ENCODE measurements at regions of chr17 and their contacts with region 1.

Region 1: DNA sequence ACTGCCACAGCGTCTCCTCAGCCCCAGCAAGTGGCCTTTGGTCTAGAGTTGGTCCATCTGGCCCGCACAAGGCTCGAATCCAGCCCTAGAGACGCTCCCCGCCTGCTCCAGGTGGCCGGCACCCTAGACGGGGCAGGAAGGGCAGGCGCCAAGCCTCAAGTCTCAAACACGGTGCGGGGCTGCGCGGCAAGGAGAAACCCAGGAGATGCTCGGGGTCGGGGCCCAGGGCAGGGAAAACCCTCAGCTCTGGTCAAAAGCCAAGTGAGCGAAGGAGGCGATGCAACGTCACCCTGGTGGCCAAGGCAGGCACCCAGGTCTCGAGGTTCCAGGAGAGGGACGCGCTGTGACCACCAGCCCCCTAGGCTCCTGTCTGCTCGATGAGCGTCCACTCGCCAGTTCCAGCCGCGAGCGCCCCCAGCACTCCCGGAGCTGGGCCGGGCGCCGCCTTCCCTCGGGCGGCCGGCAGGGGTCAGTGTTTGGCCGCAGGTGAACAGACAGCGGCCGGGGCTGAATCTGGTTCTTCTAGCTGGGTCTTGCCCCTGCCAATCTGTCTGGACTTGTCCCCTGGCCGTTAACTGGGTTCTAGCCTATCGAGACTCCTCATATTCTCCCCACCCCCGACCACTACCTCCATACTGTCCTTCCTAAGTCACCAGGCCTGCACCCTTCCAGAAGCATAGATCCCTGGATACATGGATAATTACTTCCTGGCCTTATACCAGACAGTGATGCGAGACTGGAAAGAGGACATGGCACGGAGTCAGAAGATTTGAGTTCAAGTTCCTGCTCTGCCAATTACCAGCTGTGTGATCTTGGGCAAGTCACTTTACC is 44.0 kb downstream of the PRAC1 start:
- DNase-seq: peak; percentile 53
- H3K4me3 ChIP-seq: no peak overlapping the region
- H3K27ac ChIP-seq: no peak overlapping the region
- H3K4me1 ChIP-seq: no peaks in the 10 kb centered on the region
- H3K27me3 ChIP-seq: peaks cover 13 to 19% of the 10 kb centered on the region in 2 experiments
- CTCF ChIP-seq: peak; percentile 95 to 100
- POLR2A ChIP-seq: no peak

Region 2: GRCh38 chr17:48636177-48637018 is 42.0 kb before region 1 on chr17:
- CTCF ChIA-PET with region 1: interaction called, 10 read pairs
- POLR2A ChIA-PET with region 1: no interaction called
- dilution Hi-C with region 1: no loop called
- intact Hi-C with region 1: no loop called
- DNase-seq: peak; percentile 93
- H3K4me3 ChIP-seq: no peak overlapping the region
- H3K27ac ChIP-seq: no peak overlapping the region
- H3K4me1 ChIP-seq: no peaks in the 10 kb centered on the region
- H3K27me3 ChIP-seq: peaks cover 69 to 85% of the 10 kb centered on the region in 2 experiments
- CTCF ChIP-seq: peak; percentile 89 to 96
- POLR2A ChIP-seq: no peak

Region 3: GRCh38 chr17:48711102-48711501 is 32.7 kb after region 1 on chr17:
- CTCF ChIA-PET with region 1: interaction called, 13 read pairs
- POLR2A ChIA-PET with region 1: no interaction called
- dilution Hi-C with region 1: no loop called
- intact Hi-C with region 1: no loop called
- DNase-seq: no peak
- H3K4me3 ChIP-seq: no peak overlapping the region
- H3K27ac ChIP-seq: no peak overlapping the region
- H3K4me1 ChIP-seq: no peaks in the 10 kb centered on the region
- H3K27me3 ChIP-seq: peaks cover 29 to 39% of the 10 kb centered on the region in 2 experiments
- CTCF ChIP-seq: no peak
- POLR2A ChIP-seq: no peak

Region 4: DNA sequence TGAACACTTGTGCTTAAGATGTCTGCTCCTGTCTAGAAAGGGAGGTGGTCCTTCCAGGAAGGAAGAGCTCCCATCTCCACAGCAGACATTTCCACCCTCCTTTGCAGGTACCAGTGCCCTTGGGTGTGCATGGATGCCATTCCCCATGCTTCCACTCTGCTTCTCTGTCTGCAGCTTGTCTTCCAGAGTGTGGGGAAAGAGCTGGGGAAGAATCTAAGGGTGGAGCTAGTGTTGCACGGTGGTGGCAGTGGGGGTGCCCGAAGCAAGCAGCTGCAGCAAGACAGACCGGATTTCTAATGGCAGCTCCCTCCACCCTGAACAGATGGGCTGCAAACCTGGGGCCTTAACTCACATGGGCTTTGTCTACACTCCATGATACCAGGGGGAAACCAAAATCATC is 72.8 kb after region 1 on chr17:
- CTCF ChIA-PET with region 1: interaction called, 10 read pairs
- POLR2A ChIA-PET with region 1: no interaction called
- dilution Hi-C with region 1: loop called (anchors 25 kb)
- intact Hi-C with region 1: no loop called
- DNase-seq: no peak
- H3K4me3 ChIP-seq: no peak overlapping the region
- H3K27ac ChIP-seq: no peak overlapping the region
- H3K4me1 ChIP-seq: peaks cover 16% of the 10 kb centered on the region
- H3K27me3 ChIP-seq: peaks cover 85 to 95% of the 10 kb centered on the region in 2 experiments
- CTCF ChIP-seq: no peak
- POLR2A ChIP-seq: no peak

Region 5: DNA sequence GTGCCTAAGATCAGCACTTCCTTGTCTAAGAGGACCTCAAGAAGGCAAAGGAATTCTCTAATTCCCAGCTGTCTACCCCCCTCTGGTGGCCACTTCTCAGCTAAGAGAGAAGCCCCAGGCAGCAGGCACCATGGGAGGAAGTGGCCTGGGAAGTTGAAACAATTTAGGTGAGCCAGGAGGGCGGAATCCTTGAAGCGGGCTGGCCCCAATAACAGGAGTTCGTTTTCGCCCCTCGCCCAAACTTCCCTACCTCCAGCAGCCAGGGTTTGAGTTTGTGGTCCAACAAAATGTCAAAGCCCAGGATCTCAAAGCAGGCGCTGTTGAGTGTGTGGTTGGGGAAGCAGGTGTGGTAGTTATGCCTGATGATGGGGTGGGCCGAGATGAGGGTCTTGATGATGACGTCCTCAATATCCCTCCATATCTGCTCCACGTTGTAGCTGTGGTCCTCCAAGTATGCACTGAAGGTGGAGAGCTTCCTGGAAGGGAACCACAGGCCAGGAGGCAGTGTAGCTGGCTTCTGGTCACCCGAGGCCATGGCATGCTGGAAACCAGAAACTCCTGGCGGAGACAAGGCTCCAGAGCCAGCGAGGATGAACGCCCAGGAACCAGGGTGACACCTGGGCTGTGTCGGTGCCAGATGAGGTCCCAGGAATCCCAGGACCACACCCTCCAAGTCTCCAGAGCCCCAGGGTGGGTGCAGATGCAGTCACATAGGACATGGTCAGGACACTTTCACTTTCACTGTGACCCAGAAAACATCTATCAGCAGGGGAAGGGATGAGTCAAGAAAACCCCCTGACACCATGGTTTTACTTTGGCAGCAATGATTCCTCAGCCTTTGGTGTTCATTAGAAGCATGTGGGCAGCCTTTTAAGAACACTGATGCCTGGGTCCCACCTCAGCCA is 113.0 kb after region 1 on chr17:
- CTCF ChIA-PET with region 1: interaction called, 220 read pairs
- POLR2A ChIA-PET with region 1: no interaction called
- dilution Hi-C with region 1: no loop called
- intact Hi-C with region 1: loop called (anchors 1 kb)
- DNase-seq: peak; percentile 79
- H3K4me3 ChIP-seq: no peak overlapping the region
- H3K27ac ChIP-seq: no peak overlapping the region
- H3K4me1 ChIP-seq: no peaks in the 10 kb centered on the region
- H3K27me3 ChIP-seq: peaks cover 9 to 15% of the 10 kb centered on the region in 2 experiments
- CTCF ChIP-seq: peak; percentile 78 to 84
- POLR2A ChIP-seq: no peak

Region 6: GRCh38 chr17:48816774-48817590 is 138.6 kb after region 1 on chr17 and contains the start of gene TTLL6:
- CTCF ChIA-PET with region 1: interaction called, 21 read pairs
- POLR2A ChIA-PET with region 1: no interaction called
- dilution Hi-C with region 1: no loop called
- intact Hi-C with region 1: no loop called
- DNase-seq: peak; percentile 85
- H3K4me3 ChIP-seq: peak within 1 kb of the TSS in 2 of 3 experiments; percentile 14 to 40
- H3K27ac ChIP-seq: no peak within 1 kb of the TSS
- H3K4me1 ChIP-seq: peaks cover 6% of the 10 kb centered on the region
- H3K27me3 ChIP-seq: peaks cover 11 to 21% of the 10 kb centered on the region in 2 experiments
- CTCF ChIP-seq: no peak
- POLR2A ChIP-seq: no peak
- total RNA-seq, gene TTLL6: not detected in 2 replicates

Measured in endothelial cell of umbilical vein (primary cell).